ENCODE measurements at regions of chr4 and their contacts with region 1.

Region 1: DNA sequence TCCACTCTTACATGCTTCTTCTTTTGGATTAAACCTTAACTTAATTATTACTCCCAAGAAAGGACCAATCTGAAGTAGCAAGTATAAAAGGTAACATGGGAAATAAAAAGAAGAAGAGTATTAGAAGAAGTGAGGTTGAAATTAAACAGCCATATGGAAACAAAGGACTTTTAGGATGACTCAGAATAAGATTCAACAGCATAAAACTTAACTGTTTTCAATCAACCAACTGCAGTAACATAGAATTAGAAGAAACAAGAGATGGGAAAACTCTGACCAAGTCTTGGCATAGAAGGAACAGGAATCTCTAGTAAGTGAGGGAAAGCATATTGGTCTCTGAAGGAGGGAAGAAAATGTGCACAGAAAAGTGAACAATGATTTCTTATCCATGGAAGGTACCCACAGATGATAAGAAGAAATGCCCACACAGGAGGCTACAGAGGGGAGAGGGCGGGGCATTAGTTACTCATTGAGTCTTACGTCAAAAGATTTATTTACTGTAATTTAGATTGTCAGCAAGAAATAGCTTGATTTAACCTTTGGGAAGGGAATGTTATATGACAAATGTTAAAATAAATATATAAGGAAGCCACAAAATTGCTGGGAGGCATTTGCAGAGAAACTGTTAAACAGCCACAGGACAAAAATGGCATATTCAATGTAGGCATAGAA is 177.3 kb downstream of the BANK1 start:
- DNase-seq: no peak
- ATAC-seq: no peak
- H3K4me3 ChIP-seq: no peak overlapping the region
- H3K4me3 Mint-ChIP-seq: no peak overlapping the region
- H3K27ac ChIP-seq: peak overlapping the region in 1 of 2 donors; percentile 39
- H3K27ac Mint-ChIP-seq: peak overlapping the region; percentile 51
- H3K4me1 ChIP-seq: peaks cover 18 to 52% of the 10 kb centered on the region in 2 donors
- H3K4me1 Mint-ChIP-seq: peaks cover 65% of the 10 kb centered on the region
- H3K27me3 ChIP-seq: no peaks in the 10 kb centered on the region
- H3K27me3 Mint-ChIP-seq: no peaks in the 10 kb centered on the region
- CTCF ChIP-seq: no peak

Region 2: DNA sequence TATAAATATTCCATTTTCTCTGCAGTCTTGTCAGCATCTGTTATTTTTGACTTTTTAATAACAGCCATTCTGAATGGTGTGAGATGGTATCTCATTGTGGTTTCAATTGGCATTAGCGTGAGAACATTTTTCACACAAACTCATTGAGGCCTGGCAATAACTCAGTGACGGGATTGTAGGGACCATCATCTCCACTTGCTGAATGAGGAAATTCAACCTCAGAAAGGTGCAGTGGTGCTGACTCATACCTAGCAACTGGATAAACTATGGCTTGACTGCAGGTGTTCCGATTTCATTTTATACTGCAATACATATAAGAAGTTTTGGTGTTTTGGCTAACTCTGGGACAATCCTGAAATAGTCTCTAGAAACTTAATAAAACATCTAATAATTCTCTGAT is 1689.3 kb before region 1 on chr4:
- CTCF ChIA-PET with region 1: no interaction called
- POLR2A ChIA-PET with region 1: no interaction called
- intact Hi-C with region 1: no loop called
- DNase-seq: no peak
- ATAC-seq: no peak
- H3K4me3 ChIP-seq: no peak overlapping the region
- H3K4me3 Mint-ChIP-seq: no peak overlapping the region
- H3K27ac ChIP-seq: no peak overlapping the region
- H3K27ac Mint-ChIP-seq: no peak overlapping the region
- H3K4me1 ChIP-seq: no peaks in the 10 kb centered on the region
- H3K4me1 Mint-ChIP-seq: no peaks in the 10 kb centered on the region
- H3K27me3 ChIP-seq: no peaks in the 10 kb centered on the region
- H3K27me3 Mint-ChIP-seq: peaks cover 13% of the 10 kb centered on the region
- CTCF ChIP-seq: no peak

Region 3: GRCh38 chr4:101785486-101785885 is 182.3 kb before region 1 on chr4:
- CTCF ChIA-PET with region 1: no interaction called
- POLR2A ChIA-PET with region 1: no interaction called
- intact Hi-C with region 1: no loop called
- DNase-seq: no peak
- ATAC-seq: no peak
- H3K4me3 ChIP-seq: no peak overlapping the region
- H3K4me3 Mint-ChIP-seq: no peak overlapping the region
- H3K27ac ChIP-seq: no peak overlapping the region
- H3K27ac Mint-ChIP-seq: no peak overlapping the region
- H3K4me1 ChIP-seq: peaks cover 11 to 39% of the 10 kb centered on the region in 2 donors
- H3K4me1 Mint-ChIP-seq: peaks cover 39% of the 10 kb centered on the region
- H3K27me3 ChIP-seq: no peaks in the 10 kb centered on the region
- H3K27me3 Mint-ChIP-seq: no peaks in the 10 kb centered on the region
- CTCF ChIP-seq: no peak

Region 4: GRCh38 chr4:101953949-101954348 is 13.9 kb before region 1 on chr4:
- CTCF ChIA-PET with region 1: no interaction called
- POLR2A ChIA-PET with region 1: no interaction called
- intact Hi-C with region 1: loop called (anchors 2 kb)
- DNase-seq: no peak
- ATAC-seq: no peak
- H3K4me3 ChIP-seq: no peak overlapping the region
- H3K4me3 Mint-ChIP-seq: no peak overlapping the region
- H3K27ac ChIP-seq: peak overlapping the region in 1 of 2 donors; percentile 59
- H3K27ac Mint-ChIP-seq: peak overlapping the region; percentile 57
- H3K4me1 ChIP-seq: no peaks in the 10 kb centered on the region
- H3K4me1 Mint-ChIP-seq: peaks cover 47% of the 10 kb centered on the region
- H3K27me3 ChIP-seq: no peaks in the 10 kb centered on the region
- H3K27me3 Mint-ChIP-seq: no peaks in the 10 kb centered on the region
- CTCF ChIP-seq: no peak

Region 5: DNA sequence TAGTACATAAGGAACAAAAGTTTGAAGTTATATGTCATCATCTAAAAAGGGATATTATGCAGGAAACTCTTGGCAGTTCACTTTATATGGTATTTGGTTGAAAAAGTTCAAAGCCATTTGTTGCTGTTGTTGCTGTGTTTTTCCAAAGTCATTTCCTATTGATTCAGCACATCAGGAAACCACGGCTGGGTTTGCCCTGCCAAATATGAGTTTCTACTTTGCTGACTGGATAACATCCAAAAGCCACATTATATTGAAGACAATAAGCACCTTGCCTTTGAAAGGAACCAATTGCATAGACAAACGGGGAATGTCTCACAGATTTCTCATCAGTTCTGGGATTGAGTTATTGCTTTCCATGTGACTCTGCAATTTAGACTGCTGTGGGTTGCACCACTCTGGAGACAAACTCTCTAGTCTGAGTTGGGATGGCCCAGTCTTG is 171.3 kb after region 1 on chr4:
- CTCF ChIA-PET with region 1: no interaction called
- POLR2A ChIA-PET with region 1: no interaction called
- intact Hi-C with region 1: no loop called
- DNase-seq: no peak
- ATAC-seq: no peak
- H3K4me3 ChIP-seq: no peak overlapping the region
- H3K4me3 Mint-ChIP-seq: no peak overlapping the region
- H3K27ac ChIP-seq: no peak overlapping the region
- H3K27ac Mint-ChIP-seq: no peak overlapping the region
- H3K4me1 ChIP-seq: no peaks in the 10 kb centered on the region
- H3K4me1 Mint-ChIP-seq: no peaks in the 10 kb centered on the region
- H3K27me3 ChIP-seq: no peaks in the 10 kb centered on the region
- H3K27me3 Mint-ChIP-seq: peaks cover 18% of the 10 kb centered on the region
- CTCF ChIP-seq: no peak

Region 6: DNA sequence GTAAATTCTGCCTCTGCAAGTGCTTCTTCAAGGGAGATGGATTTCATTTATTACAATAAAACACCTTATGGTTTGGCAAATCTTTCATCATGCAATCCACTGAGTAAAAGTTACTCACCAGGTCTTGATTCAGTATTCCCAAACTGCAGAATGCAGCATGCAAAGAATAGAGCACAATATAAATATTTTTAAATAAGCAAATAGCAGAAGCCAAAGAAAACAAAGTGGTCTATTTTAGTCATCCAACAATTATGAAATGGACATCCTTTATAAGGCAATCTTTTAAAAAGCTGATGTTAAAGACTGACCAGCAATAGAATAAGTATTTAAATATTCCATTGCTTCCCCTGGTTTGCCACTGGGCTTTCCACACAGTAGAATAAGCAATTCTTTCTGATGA is 318.0 kb after region 1 on chr4:
- CTCF ChIA-PET with region 1: no interaction called
- POLR2A ChIA-PET with region 1: no interaction called
- intact Hi-C with region 1: no loop called
- DNase-seq: no peak
- ATAC-seq: no peak
- H3K4me3 ChIP-seq: no peak overlapping the region
- H3K4me3 Mint-ChIP-seq: no peak overlapping the region
- H3K27ac ChIP-seq: no peak overlapping the region
- H3K27ac Mint-ChIP-seq: no peak overlapping the region
- H3K4me1 ChIP-seq: no peaks in the 10 kb centered on the region
- H3K4me1 Mint-ChIP-seq: no peaks in the 10 kb centered on the region
- H3K27me3 ChIP-seq: no peaks in the 10 kb centered on the region
- H3K27me3 Mint-ChIP-seq: no peaks in the 10 kb centered on the region
- CTCF ChIP-seq: no peak